Activated T-helper 2 cell treated with anti-CD3 and anti-CD28 coated beads, Interferon-gamma antibody, Interleukin-2, Interleukin-4, amounts not matched to agents 10 μg/mL and 5 μg/mL and 100 μg/mL, durations not matched to agents 14 hours and 24 hours and 36 hours (primary cell): ENCODE measurements at regions of chr15 and their contacts with region 1.

Region 1: GRCh38 chr15:90686435-90687218 is 30.5 kb upstream of the BLM start:
- DNase-seq: peak; percentile 53
- H3K4me3 Mint-ChIP-seq: peak overlapping the region; percentile 30
- H3K27ac Mint-ChIP-seq: peak overlapping the region; percentile 98
- H3K4me1 Mint-ChIP-seq: peaks cover 50% of the 10 kb centered on the region
- H3K27me3 Mint-ChIP-seq: no peaks in the 10 kb centered on the region

Region 2: DNA sequence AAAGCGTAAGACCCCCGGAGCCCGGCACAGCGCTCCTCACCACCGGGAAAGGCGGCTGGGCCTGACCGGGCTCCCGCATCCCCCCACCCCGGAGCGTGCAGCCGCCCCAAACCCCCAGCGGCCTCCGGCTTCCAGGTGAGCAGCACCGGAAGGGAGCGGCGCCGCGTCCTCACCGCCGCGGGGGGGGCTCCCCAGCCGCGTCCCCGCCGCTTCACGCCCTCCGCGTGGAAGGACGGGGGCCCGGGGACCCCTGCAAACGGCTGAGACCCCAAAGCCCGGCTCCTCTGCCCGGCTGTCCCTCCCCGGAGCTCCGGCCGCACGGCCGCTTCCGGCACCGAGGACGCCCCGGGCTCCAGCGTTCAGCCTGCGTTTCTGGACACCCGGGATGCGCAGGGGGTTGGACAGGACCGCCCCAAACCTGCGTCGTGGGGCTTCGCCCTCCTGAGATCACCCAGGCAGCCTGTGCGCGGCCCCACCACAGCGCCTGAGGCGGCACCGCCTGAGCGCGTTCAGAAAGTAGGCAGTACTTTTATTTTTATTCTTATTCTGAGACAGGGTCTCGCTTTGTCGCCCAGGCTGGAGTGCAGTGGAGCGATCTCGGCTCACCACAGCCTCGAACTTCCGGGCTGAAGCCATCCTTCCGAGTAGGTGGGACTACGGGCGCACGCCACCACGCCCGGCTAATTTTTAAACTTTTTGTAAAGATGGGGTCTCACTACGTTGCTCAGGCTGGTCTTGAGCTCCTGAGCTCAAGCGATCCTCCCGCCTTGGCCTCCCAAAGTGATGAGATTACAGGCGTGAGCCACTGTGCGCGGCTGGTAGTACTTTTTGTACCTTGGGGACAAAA is 21.1 kb before region 1 on chr15:
- intact Hi-C with region 1: loop called (anchors 1 kb)
- DNase-seq: peak; percentile 68
- H3K4me3 Mint-ChIP-seq: peak overlapping the region; percentile 85
- H3K27ac Mint-ChIP-seq: peak overlapping the region; percentile 91
- H3K4me1 Mint-ChIP-seq: peaks cover 45% of the 10 kb centered on the region
- H3K27me3 Mint-ChIP-seq: no peaks in the 10 kb centered on the region

Region 3: GRCh38 chr15:91228383-91228782 is 541.8 kb after region 1 on chr15:
- intact Hi-C with region 1: no loop called
- DNase-seq: no peak
- H3K4me3 Mint-ChIP-seq: no peak overlapping the region
- H3K27ac Mint-ChIP-seq: no peak overlapping the region
- H3K4me1 Mint-ChIP-seq: no peaks in the 10 kb centered on the region
- H3K27me3 Mint-ChIP-seq: peaks cover 8% of the 10 kb centered on the region